Heart left ventricle (tissue), 16 donors: ENCODE measurements at regions of chr3 and their contacts with region 1.

Region 1: DNA sequence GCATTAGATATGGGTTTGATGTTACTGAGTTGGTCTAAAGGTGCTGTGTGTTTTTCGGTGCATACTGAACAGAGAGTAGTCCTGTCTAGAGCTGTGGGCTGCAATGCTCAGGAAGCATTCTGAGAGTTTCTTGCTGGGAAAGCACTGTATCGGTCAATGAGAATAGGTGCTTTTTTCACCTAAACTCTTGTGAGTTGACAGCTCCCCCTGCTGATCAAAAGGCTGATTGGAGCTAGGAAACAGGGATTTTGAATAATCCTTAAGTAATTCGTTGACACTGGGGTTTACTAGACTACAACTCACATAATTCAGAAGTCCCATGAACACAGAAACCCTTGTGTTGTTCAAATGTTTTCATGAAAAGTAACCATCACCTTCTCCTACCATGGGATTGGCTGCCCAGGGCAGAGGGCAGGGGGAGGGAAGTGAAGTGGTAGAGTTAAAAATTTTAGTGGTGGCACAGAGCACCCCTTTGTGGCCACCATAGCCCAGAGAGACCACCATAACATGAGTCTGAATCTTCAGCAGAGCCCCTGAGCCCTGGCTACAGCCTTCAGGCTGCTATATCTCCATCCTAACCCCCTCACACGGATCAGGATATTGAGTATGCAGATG is 13.0 kb upstream of the MANF start:
- DNase-seq: no peak
- ATAC-seq: peak in 1 of 4 donors; percentile 17
- H3K4me3 ChIP-seq: no peak overlapping the region
- H3K27ac ChIP-seq: no peak overlapping the region
- H3K4me1 ChIP-seq: no peaks in the 10 kb centered on the region
- H3K27me3 ChIP-seq: no peaks in the 10 kb centered on the region
- CTCF ChIP-seq: peak; percentile 42 to 68 (median 56)
- POLR2A ChIP-seq: no peak

Region 2: DNA sequence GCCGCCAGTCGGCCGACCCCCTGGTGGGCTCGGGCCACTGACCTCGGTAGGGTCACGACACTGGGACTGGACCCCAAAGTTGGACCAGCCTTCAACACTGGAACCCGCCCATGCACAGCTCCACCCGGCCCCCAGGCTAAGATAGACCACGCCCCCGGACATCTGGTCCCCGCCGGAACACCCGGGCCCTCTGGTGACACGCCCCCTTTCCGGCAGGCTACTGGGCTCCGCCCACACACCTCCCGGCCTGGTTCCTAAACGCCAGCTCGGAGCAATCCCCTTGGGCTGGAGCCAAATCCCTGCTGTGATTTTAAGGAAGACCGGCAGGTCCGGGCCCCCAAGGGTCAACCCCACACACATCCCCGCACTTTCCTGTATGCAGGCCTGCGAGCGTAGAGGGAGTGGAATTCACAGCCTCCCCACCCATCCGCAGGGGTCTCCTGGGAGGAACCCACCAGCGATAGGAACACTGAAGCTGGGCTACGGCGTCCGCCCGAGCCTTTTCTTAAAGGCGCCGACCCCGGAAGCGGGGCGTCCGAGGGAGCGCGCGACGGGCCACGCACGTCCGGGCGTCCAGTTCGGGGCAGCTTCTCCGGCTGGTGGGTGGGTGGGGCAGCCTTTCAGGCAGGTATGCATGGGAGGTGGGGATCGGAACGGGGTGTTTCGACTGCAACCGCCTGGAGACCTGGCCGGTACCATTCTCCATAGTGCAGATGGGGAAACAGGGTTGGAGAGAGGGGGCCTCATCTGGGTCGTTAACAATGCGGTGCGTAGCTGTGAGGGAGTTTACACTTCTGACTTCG is 802.9 kb before region 1 on chr3 and contains the start of gene HEMK1:
- intact Hi-C with region 1: loop called in 1 of 10 experiments (anchors 5 kb)
- DNase-seq: peak; percentile 98 to 99 (median 99)
- ATAC-seq: peak; percentile 87 to 92 (median 89)
- H3K4me3 ChIP-seq: peak within 1 kb of the TSS; percentile 57 to 95 (median 81)
- H3K27ac ChIP-seq: peak within 1 kb of the TSS; percentile 70 to 98 (median 95)
- H3K4me1 ChIP-seq: peaks cover 0 to 66% (median 34%) of the 10 kb centered on the region in 12 donors
- H3K27me3 ChIP-seq: no peaks in the 10 kb centered on the region
- CTCF ChIP-seq: no peak
- POLR2A ChIP-seq: peak in 1 of 2 donors; percentile 34
- total RNA-seq, gene HEMK1: 7.8 to 19.7 (median 13.8) TPM

Region 3: DNA sequence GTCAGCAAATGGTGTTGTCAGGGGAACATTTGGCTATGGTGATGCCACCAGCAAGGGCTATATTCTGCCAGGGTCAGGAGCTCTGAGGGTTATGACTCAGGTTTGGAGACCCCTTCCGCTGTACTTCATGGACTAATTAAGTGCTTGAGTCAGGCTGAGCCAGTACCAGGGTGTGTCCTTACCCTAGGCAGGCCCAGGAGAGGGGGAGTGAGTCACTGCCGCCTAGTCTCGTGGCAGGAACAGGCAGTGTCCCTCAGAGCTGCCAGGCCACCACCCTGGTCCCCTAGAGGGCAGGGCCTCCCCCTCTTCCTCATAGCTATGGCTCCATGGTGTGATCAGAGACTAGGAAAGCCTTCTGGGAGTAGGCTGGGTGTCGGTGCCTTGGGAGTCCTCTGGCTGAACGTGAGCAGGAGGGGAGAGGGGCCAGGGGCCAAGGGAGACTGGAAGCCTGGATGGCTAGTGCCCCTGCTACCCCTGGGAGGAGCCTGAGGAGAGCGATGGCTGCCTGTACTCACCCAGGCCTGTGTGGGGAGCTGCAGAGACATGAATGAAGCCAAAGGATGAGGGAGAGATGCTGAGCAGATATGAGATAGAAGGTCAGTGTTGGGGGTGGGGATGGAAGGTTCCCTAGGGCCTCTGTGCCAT is 744.5 kb before region 1 on chr3:
- intact Hi-C with region 1: loop called in 1 of 10 experiments (anchors 10 kb)
- DNase-seq: peak; percentile 49 to 91 (median 73)
- ATAC-seq: peak; percentile 74 to 92 (median 88)
- H3K4me3 ChIP-seq: no peak overlapping the region
- H3K27ac ChIP-seq: peak overlapping the region; percentile 40 to 99 (median 70)
- H3K4me1 ChIP-seq: peaks cover 0 to 99% (median 68%) of the 10 kb centered on the region in 12 donors
- H3K27me3 ChIP-seq: no peaks in the 10 kb centered on the region
- CTCF ChIP-seq: peak in 8 of 12 donors; percentile 5 to 48 (median 34)
- POLR2A ChIP-seq: no peak

Region 4: GRCh38 chr3:50674349-50675178 is 697.5 kb before region 1 on chr3 and contains the start of gene DOCK3:
- intact Hi-C with region 1: loop called in 2 of 10 experiments (anchors 10 kb)
- DNase-seq: peak; percentile 41 to 81 (median 62)
- ATAC-seq: peak; percentile 66 to 94 (median 88)
- H3K4me3 ChIP-seq: peak within 1 kb of the TSS; percentile 14 to 82 (median 55)
- H3K27ac ChIP-seq: peak within 1 kb of the TSS in 2 of 12 donors; percentile 42 to 60
- H3K4me1 ChIP-seq: peaks cover 0 to 12% (median 1%) of the 10 kb centered on the region in 12 donors
- H3K27me3 ChIP-seq: peaks cover 2 to 61% (median 34%) of the 10 kb centered on the region in 9 donors
- CTCF ChIP-seq: no peak
- POLR2A ChIP-seq: no peak
- total RNA-seq, gene DOCK3: 2.9 to 6.7 (median 4.8) TPM

Region 5: GRCh38 chr3:50971487-50971924 is 400.5 kb before region 1 on chr3:
- intact Hi-C with region 1: loop called in 4 of 10 experiments (anchors 5 to 10 kb)
- DNase-seq: no peak
- ATAC-seq: peak in 3 of 4 donors; percentile 48 to 54 (median 48)
- H3K4me3 ChIP-seq: no peak overlapping the region
- H3K27ac ChIP-seq: no peak overlapping the region
- H3K4me1 ChIP-seq: no peaks in the 10 kb centered on the region
- H3K27me3 ChIP-seq: no peaks in the 10 kb centered on the region
- CTCF ChIP-seq: peak; percentile 51 to 74 (median 64)
- POLR2A ChIP-seq: no peak

Region 6: GRCh38 chr3:51099794-51100535 is 272.1 kb before region 1 on chr3:
- intact Hi-C with region 1: loop called in 2 of 10 experiments (anchors 5 kb)
- DNase-seq: peak in 2 of 5 donors; percentile 13 to 26
- ATAC-seq: peak in 3 of 4 donors; percentile 49 to 67 (median 52)
- H3K4me3 ChIP-seq: no peak overlapping the region
- H3K27ac ChIP-seq: no peak overlapping the region
- H3K4me1 ChIP-seq: no peaks in the 10 kb centered on the region
- H3K27me3 ChIP-seq: no peaks in the 10 kb centered on the region
- CTCF ChIP-seq: peak; percentile 38 to 71 (median 56)
- POLR2A ChIP-seq: no peak

Region 7: DNA sequence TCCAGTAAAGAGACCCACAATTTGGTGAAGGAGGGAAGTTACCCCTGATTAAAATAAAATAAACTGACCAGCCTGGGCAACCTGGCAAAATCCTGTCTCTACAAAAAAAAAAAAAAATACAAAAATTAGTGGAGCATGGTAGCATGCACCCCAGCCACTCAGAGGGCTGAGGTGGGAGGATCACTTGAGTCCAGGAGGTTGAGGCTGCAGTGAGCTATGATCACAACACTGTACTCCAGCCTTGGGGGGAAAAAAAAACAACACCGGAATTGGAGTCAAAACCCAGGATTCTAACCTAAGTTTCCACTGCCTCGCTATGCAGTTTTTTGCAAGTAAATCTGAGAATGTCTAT is 105.3 kb after region 1 on chr3:
- intact Hi-C with region 1: no loop called
- DNase-seq: no peak
- ATAC-seq: no peak
- H3K4me3 ChIP-seq: no peak overlapping the region
- H3K27ac ChIP-seq: no peak overlapping the region
- H3K4me1 ChIP-seq: no peaks in the 10 kb centered on the region
- H3K27me3 ChIP-seq: no peaks in the 10 kb centered on the region
- CTCF ChIP-seq: no peak
- POLR2A ChIP-seq: no peak